AG04449 (cell line): ENCODE measurements at regions of chr3 and their contacts with region 1.

Region 1: GRCh38 chr3:115783938-115784738 is 160.8 kb downstream of the GAP43 start:
- DNase-seq: no peak
- H3K4me3 ChIP-seq: peak overlapping the region; percentile 67
- CTCF ChIP-seq: peak; percentile 96

Region 2: DNA sequence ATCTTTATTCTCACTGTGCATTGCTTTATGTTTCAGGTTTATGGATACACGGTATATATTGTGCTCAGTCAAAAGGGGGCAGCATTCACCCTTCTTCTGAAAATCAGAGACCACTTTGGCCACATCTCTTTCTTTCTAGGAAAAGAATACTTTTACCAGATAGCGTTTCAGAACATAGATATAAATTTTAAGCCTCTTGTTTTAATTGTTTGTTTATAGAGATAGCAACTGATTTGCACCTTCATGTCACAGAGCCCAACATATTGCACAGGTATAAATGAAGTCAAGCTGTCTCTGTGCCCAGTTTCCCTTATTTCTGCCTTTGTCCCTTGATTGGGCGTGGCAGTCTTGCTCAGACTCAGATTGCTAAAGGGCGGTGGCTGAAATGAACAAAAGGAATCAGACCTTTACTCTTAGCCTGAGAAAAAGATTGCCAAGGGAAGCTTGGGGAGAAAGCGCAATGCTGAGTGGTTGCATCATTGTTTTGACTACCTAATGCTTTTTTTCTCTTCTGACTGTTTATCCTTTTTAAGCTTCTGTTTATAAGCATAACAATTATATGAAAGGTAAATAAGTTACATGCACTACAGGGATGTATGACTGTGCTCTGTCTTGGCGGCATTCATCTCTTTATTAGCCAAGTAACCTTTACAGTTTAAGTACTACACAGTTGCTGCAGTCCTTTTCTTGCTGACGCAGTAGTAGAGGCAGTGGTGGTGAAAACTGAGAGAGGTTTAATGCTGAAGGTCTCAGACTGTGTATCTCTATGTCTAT is 566.3 kb before region 1 on chr3:
- CTCF ChIA-PET with region 1: interaction called, 42 read pairs
- POLR2A ChIA-PET with region 1: no interaction called
- DNase-seq: no peak
- H3K4me3 ChIP-seq: no peak overlapping the region
- CTCF ChIP-seq: peak; percentile 58

Region 3: GRCh38 chr3:115704661-115705338 is 79.3 kb before region 1 on chr3:
- CTCF ChIA-PET with region 1: interaction called, 20 read pairs
- POLR2A ChIA-PET with region 1: interaction called, 6 read pairs
- DNase-seq: no peak
- H3K4me3 ChIP-seq: no peak overlapping the region
- CTCF ChIP-seq: no peak

Region 4: DNA sequence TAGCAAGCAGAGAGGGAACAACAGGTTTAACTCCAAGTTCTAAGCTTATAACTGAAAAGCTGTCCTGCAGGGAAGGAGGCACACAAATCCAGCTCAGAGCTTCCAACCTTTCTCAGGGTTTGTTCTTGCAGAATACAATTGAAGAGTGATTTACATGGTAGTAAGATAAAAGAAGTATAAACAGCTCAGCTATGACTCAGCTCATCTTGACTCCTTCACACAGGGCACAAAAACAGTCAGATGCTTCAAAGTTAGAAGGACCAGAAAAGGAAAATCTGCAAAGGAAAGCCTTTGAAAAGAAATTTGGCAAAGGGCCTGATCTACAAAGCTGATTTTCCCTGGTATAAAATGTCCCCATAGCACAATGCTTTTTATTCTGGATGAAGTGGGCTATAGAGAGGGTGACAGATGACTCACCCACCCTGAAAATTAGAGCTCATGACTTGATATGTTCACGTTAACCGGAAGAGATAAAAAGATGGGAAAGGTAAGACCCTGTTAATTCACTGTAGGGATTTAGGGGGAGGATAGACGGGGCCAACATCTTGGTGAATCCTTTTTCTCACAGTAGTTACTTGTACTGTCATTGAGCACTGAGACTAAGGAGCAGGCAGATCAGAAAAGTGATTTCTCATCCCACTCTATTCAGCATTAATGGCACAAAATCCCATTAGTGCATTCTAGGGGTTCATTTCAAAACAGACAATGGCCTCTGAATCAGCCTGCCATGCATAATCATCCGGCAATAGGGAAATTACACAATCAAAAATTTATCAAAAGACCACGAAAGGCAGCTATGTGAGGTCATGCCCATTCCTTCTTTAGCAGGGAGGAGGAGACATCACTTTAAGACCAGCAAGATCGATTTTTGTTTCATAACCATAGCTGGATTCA is 17.3 kb before region 1 on chr3:
- CTCF ChIA-PET with region 1: interaction called, 30 read pairs
- POLR2A ChIA-PET with region 1: no interaction called
- DNase-seq: no peak
- H3K4me3 ChIP-seq: no peak overlapping the region
- CTCF ChIP-seq: no peak

Region 5: GRCh38 chr3:115814778-115815380 is 30.7 kb after region 1 on chr3:
- CTCF ChIA-PET with region 1: interaction called, 26 read pairs
- POLR2A ChIA-PET with region 1: no interaction called
- DNase-seq: no peak
- H3K4me3 ChIP-seq: no peak overlapping the region
- CTCF ChIP-seq: peak; percentile 75